Dendritic cell treated with granulocyte-macrophage colony-stimulating factor and Interleukin-4, amounts not matched to agents 40 ng/mL and 50 ng/mL, for 4 days (primary cell): ENCODE measurements at regions of chr9 and their contacts with region 1.

Region 1: GRCh38 chr9:224582-225520 is 10.2 kb downstream of the DOCK8 start:
- H3K4me3 Mint-ChIP-seq: peak overlapping the region; percentile 11
- H3K27ac Mint-ChIP-seq: peak overlapping the region; percentile 30
- H3K4me1 Mint-ChIP-seq: peaks cover 32% of the 10 kb centered on the region
- H3K27me3 Mint-ChIP-seq: no peaks in the 10 kb centered on the region

Region 2: GRCh38 chr9:257957-258356 is 33.1 kb after region 1 on chr9:
- intact Hi-C with region 1: loop called (anchors 5 kb)
- H3K4me3 Mint-ChIP-seq: peak overlapping the region; percentile 9
- H3K27ac Mint-ChIP-seq: peak overlapping the region; percentile 83
- H3K4me1 Mint-ChIP-seq: peaks cover 31% of the 10 kb centered on the region
- H3K27me3 Mint-ChIP-seq: no peaks in the 10 kb centered on the region

Region 3: GRCh38 chr9:270657-271237 is 45.9 kb after region 1 on chr9:
- intact Hi-C with region 1: no loop called
- H3K4me3 Mint-ChIP-seq: no peak overlapping the region
- H3K27ac Mint-ChIP-seq: peak overlapping the region; percentile 80
- H3K4me1 Mint-ChIP-seq: peaks cover 68% of the 10 kb centered on the region
- H3K27me3 Mint-ChIP-seq: no peaks in the 10 kb centered on the region